ENCODE measurements at regions of chr7 and their contacts with region 1.

Region 1: GRCh38 chr7:139777948-139778841 is at the start of gene HIPK2:
- DNase-seq: peak; percentile 83
- H3K4me3 ChIP-seq: peak within 1 kb of the TSS; percentile 87 to 98 (median 95)
- H3K27ac ChIP-seq: peak within 1 kb of the TSS; percentile 87 to 98 (median 96)
- H3K4me1 ChIP-seq: peaks cover 10 to 29% (median 21%) of the 10 kb centered on the region in 4 donors
- H3K27me3 ChIP-seq: peaks cover 7% of the 10 kb centered on the region
- CTCF ChIP-seq: no peak
- EP300 ChIP-seq: no peak
- POLR2A ChIP-seq: no peak
- total RNA-seq, gene HIPK2: 27.3 to 40.3 (median 33.6) TPM

Region 2: GRCh38 chr7:139452958-139453672 is 325.1 kb before region 1 on chr7:
- in situ Hi-C with region 1: no loop called
- intact Hi-C with region 1: no loop called
- DNase-seq: no peak
- H3K4me3 ChIP-seq: no peak overlapping the region
- H3K27ac ChIP-seq: no peak overlapping the region
- H3K4me1 ChIP-seq: no peaks in the 10 kb centered on the region
- H3K27me3 ChIP-seq: no peaks in the 10 kb centered on the region
- CTCF ChIP-seq: no peak
- EP300 ChIP-seq: no peak
- POLR2A ChIP-seq: no peak

Region 3: DNA sequence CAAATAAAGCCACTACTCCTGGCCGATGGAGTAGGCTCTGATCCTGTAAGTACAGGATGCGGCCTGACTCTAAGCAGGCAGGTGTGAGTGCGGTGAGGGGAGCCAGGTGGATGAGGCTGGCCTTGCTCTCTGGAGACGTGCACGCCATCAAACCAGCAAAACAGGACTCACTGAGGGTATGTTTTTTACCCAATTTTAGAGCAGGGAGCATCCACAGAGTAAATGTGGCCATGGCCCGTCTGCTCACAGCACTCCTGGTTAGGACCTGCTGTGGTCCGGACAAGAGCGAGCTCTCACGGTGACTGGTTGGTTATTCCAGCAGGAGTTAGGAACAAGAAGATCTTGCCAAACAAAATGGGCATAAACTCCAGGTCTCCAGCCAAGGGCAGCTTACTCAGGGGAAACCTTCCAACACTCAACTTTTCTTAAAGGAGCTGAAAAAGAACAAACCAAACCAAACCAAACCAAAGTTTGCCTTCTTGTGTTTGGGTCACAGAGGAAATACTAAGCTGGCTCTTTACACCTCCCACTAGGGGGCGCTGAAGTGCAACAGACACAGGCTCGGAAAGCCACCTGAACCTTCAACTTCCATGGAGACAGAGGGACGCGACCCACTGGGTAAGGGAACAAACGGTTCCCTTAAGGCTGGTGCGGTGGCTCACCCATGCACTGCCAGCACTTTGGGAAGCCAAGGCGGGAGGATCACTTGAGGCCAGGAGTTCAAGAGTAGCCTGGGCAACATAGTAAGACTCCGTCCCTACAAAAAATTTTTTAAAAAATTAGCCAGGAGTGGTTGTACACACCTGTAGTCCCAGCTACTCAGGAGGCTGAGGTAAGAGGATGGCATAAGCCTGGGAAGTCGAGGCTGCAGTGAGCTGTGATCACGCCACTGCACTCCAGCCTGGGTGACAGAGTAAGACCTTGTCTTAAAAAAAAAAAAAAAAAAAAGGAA is 132.3 kb before region 1 on chr7:
- in situ Hi-C with region 1: no loop called
- intact Hi-C with region 1: loop called (anchors 10 kb)
- DNase-seq: peak; percentile 88
- H3K4me3 ChIP-seq: no peak overlapping the region
- H3K27ac ChIP-seq: no peak overlapping the region
- H3K4me1 ChIP-seq: peaks cover 0 to 27% (median 1%) of the 10 kb centered on the region in 4 donors
- H3K27me3 ChIP-seq: no peaks in the 10 kb centered on the region
- CTCF ChIP-seq: peak; percentile 87 to 94 (median 91)
- EP300 ChIP-seq: no peak
- POLR2A ChIP-seq: no peak

Region 4: GRCh38 chr7:139702811-139703486 is 75.2 kb before region 1 on chr7:
- in situ Hi-C with region 1: no loop called
- intact Hi-C with region 1: loop called (anchors 10 kb)
- DNase-seq: peak; percentile 30
- H3K4me3 ChIP-seq: no peak overlapping the region
- H3K27ac ChIP-seq: peak overlapping the region; percentile 23 to 49 (median 34)
- H3K4me1 ChIP-seq: peaks cover 0 to 13% (median 7%) of the 10 kb centered on the region in 4 donors
- H3K27me3 ChIP-seq: no peaks in the 10 kb centered on the region
- CTCF ChIP-seq: no peak
- EP300 ChIP-seq: no peak
- POLR2A ChIP-seq: no peak

Region 5: GRCh38 chr7:139725077-139725476 is 53.1 kb before region 1 on chr7:
- in situ Hi-C with region 1: loop called in 1 of 4 experiments (anchors 10 kb)
- intact Hi-C with region 1: no loop called
- DNase-seq: peak; percentile 32
- H3K4me3 ChIP-seq: no peak overlapping the region
- H3K27ac ChIP-seq: peak overlapping the region in 3 of 4 donors; percentile 43 to 63 (median 54)
- H3K4me1 ChIP-seq: peaks cover 35 to 63% (median 42%) of the 10 kb centered on the region in 4 donors
- H3K27me3 ChIP-seq: no peaks in the 10 kb centered on the region
- CTCF ChIP-seq: no peak
- EP300 ChIP-seq: no peak
- POLR2A ChIP-seq: no peak

Region 6: DNA sequence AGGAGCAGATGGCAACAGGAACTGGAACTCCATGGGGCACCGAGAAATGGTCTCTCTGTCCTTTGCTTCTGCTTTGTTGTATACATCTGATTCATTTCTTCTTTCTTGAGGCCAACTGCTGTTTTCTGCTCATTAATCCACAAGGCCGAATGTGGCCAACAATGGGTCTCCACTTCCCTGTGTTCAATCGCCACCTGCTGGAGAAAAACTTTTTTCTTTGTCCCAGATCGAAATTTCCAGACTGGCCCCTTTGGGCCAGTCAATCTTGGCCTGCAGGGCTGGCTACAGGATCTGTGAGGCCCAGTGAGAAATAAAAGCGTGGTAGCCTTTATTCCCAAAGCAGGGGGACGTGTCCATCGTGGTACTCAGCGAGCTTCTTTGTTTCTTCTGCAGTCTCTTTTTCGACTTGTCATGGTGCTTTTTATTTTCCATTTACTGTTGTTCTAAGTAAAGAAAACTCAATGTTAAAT is 225.8 kb after region 1 on chr7:
- in situ Hi-C with region 1: loop called in 1 of 4 experiments (anchors 10 kb)
- intact Hi-C with region 1: no loop called
- DNase-seq: peak; percentile 19
- H3K4me3 ChIP-seq: no peak overlapping the region
- H3K27ac ChIP-seq: no peak overlapping the region
- H3K4me1 ChIP-seq: no peaks in the 10 kb centered on the region
- H3K27me3 ChIP-seq: no peaks in the 10 kb centered on the region
- CTCF ChIP-seq: peak; percentile 38 to 63 (median 51)
- EP300 ChIP-seq: no peak
- POLR2A ChIP-seq: no peak

Region 7: GRCh38 chr7:140571537-140572122 is 793.4 kb after region 1 on chr7:
- in situ Hi-C with region 1: no loop called
- intact Hi-C with region 1: no loop called
- DNase-seq: no peak
- H3K4me3 ChIP-seq: no peak overlapping the region
- H3K27ac ChIP-seq: no peak overlapping the region
- H3K4me1 ChIP-seq: peaks cover 3 to 19% (median 5%) of the 10 kb centered on the region in 4 donors
- H3K27me3 ChIP-seq: no peaks in the 10 kb centered on the region
- CTCF ChIP-seq: no peak
- EP300 ChIP-seq: no peak
- POLR2A ChIP-seq: no peak

Measured in transverse colon (tissue), 4 donors.